ENCODE measurements at regions of chr20 and their contacts with region 1.

Region 1: GRCh38 chr20:23606652-23607049 is 934 bp upstream of the CST9 start:
- DNase-seq: peak; percentile 80 to 86
- ATAC-seq: peak; percentile 92 to 96 (median 94)
- H3K4me3 ChIP-seq: no peak overlapping the region
- H3K27ac ChIP-seq: no peak overlapping the region
- H3K4me1 ChIP-seq: no peaks in the 10 kb centered on the region
- H3K27me3 ChIP-seq: peaks cover 0 to 3% (median 0%) of the 10 kb centered on the region in 3 donors
- CTCF ChIP-seq: peak; percentile 86

Region 2: GRCh38 chr20:23350196-23350903 is 256.3 kb before region 1 on chr20 and contains the start of gene NXT1:
- intact Hi-C with region 1: loop called (anchors 10 kb)
- DNase-seq: peak; percentile 97
- ATAC-seq: peak; percentile 93 to 94 (median 93)
- H3K4me3 ChIP-seq: peak within 1 kb of the TSS; percentile 91
- H3K27ac ChIP-seq: peak within 1 kb of the TSS; percentile 99
- H3K4me1 ChIP-seq: peaks cover 13% of the 10 kb centered on the region
- H3K27me3 ChIP-seq: no peaks in the 10 kb centered on the region
- CTCF ChIP-seq: no peak
- total RNA-seq, gene NXT1: 6.7 to 18.9 (median 11.1) TPM

Region 3: GRCh38 chr20:23441850-23442313 is 164.8 kb before region 1 on chr20:
- intact Hi-C with region 1: loop called (anchors 2 to 5 kb)
- DNase-seq: peak; percentile 46 to 61
- ATAC-seq: peak; percentile 70 to 88 (median 82)
- H3K4me3 ChIP-seq: no peak overlapping the region
- H3K27ac ChIP-seq: no peak overlapping the region
- H3K4me1 ChIP-seq: no peaks in the 10 kb centered on the region
- H3K27me3 ChIP-seq: no peaks in the 10 kb centered on the region
- CTCF ChIP-seq: peak; percentile 86

Region 4: DNA sequence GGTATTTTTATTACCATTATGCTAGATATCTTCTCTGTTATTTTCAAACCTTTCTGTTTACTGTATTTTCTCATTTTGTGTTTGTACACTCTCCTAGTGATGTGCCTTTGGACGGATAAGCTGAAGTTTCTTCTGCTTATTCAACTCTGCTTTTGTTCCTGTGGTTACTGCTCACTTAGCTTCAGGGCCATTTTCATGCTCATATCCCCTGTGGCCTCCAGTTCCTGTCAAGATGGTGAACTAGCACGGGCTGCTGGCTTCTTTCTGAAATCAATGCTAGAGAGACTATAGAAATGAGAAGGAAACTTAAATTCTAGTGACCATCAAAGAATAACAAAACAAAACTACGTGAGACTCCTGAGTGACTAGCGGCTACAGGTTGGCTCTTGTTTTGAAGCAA is 122.6 kb before region 1 on chr20:
- intact Hi-C with region 1: no loop called
- DNase-seq: no peak
- ATAC-seq: no peak
- H3K4me3 ChIP-seq: no peak overlapping the region
- H3K27ac ChIP-seq: no peak overlapping the region
- H3K4me1 ChIP-seq: no peaks in the 10 kb centered on the region
- H3K27me3 ChIP-seq: no peaks in the 10 kb centered on the region
- CTCF ChIP-seq: no peak

Region 5: DNA sequence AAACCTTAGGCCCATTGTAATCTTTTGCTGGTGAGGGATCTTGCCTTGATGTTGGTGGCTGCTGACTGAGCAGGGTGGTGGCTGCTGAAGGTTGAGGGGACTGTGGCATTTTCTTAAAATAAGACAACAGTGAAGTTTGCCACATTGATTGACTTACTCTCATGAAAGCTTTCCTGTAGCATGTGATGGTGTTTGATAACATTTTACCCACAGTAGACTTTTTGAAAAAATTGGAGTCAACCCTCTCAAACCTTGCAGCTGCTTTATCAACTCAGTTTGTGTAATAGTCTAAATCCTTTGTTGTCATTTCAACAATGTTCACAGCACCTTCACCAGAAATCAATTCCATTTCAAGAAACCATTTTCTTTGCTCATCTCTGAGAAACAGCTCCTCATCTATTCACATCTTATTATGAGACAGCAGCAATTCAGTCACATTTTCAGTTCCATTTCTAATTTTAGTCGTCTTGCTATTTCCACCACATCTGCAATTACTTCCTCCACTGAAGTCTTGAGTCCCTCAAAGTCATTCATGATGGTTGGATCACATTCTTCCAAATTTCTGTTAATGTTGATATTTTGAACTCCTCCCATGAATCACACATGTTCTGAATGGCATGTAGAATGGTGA is 75.6 kb before region 1 on chr20:
- intact Hi-C with region 1: no loop called
- DNase-seq: no peak
- ATAC-seq: no peak
- H3K4me3 ChIP-seq: no peak overlapping the region
- H3K27ac ChIP-seq: no peak overlapping the region
- H3K4me1 ChIP-seq: no peaks in the 10 kb centered on the region
- H3K27me3 ChIP-seq: no peaks in the 10 kb centered on the region
- CTCF ChIP-seq: no peak

Region 6: DNA sequence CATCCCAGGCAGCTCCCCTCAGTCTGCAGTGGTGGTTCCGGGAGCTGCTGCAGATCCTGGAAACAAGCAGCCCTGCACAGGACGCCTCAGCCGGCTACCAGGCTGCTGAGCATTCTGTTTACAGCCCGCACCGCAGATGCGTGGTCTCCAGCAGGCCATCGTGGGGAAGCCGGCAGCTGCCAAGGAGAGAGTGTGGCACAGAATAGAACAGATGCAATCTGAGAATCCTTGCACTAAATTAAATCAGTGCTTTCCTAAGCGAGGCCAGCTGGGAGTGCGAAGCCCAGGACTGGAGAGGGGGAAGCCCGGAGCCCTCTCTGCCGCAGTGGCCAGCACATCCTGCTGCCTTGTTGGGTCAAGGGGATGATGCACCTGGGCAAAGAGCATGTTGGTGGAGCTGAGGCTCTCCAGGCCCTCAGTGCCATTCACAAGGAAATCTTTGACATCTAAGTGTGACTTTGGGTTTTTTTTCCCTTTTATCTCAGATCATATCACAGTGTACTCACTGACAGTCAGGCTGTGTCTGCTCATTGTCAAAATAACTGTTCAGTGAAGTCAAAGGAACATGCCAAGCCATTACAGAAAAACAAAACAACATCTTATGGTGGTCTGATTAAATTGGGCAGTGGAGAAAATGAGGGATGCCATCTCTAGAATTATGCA is 980.9 kb after region 1 on chr20:
- intact Hi-C with region 1: no loop called
- DNase-seq: no peak
- ATAC-seq: no peak
- H3K4me3 ChIP-seq: no peak overlapping the region
- H3K27ac ChIP-seq: no peak overlapping the region
- H3K4me1 ChIP-seq: no peaks in the 10 kb centered on the region
- H3K27me3 ChIP-seq: peaks cover 0 to 2% (median 0%) of the 10 kb centered on the region in 3 donors
- CTCF ChIP-seq: no peak